Activated T-helper 1 cell treated with anti-CD3 and anti-CD28 coated beads, Interleukin-12 subunit alpha, Interleukin-12 subunit beta, Interleukin-2, Interleukin-4 antibody, amounts not matched to agents 30 ng/mL and 10 ng/mL and 1 ng/mL, durations not matched to agents 14 hours and 24 hours and 36 hours (primary cell): ENCODE measurements at regions of chr12 and their contacts with region 1.

Region 1: GRCh38 chr12:94305130-94305957 is 154.3 kb downstream of the CEP83 start:
- DNase-seq: peak; percentile 75
- H3K4me3 Mint-ChIP-seq: peak overlapping the region; percentile 58
- H3K27ac Mint-ChIP-seq: peak overlapping the region; percentile 80
- H3K4me1 Mint-ChIP-seq: peaks cover 76% of the 10 kb centered on the region
- H3K27me3 Mint-ChIP-seq: no peaks in the 10 kb centered on the region

Region 2: GRCh38 chr12:94244165-94245133 is 60.9 kb before region 1 on chr12:
- intact Hi-C with region 1: loop called (anchors 1 kb)
- DNase-seq: peak; percentile 25
- H3K4me3 Mint-ChIP-seq: peak overlapping the region; percentile 25
- H3K27ac Mint-ChIP-seq: peak overlapping the region; percentile 50
- H3K4me1 Mint-ChIP-seq: peaks cover 41% of the 10 kb centered on the region
- H3K27me3 Mint-ChIP-seq: no peaks in the 10 kb centered on the region

Region 3: DNA sequence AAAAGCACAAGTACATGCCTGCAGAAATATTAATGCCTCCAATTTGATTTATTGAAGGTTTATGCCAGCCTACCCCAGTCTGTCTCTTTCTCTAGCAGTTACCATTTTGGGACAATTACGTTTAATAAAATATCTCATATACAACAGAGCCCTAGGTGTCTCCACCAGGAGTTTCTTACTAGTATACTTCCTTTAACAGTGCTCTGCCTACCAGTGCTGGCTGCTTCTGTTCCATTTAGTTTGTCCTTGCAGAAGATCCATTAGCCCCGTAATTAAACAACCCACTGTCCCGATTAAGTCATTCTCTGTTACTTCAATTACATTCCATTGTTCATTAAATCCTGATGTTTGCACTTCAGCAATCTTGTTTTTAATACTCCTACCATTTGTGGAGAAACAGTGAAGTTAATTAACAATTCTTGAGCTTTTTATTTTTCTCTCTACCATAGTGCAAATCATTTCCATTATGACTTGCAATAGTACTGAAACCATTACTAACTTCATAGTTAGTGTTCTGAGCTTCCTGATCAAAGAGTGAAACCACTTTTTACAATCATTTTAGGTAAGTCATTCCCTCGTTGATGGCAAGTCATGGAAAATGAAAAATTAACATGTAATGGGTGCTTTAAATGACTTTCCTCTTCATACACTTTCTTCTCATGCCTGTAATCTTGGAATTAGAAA is 35.9 kb before region 1 on chr12:
- intact Hi-C with region 1: loop called (anchors 1 kb)
- DNase-seq: no peak
- H3K4me3 Mint-ChIP-seq: peak overlapping the region; percentile 43
- H3K27ac Mint-ChIP-seq: peak overlapping the region; percentile 72
- H3K4me1 Mint-ChIP-seq: peaks cover 72% of the 10 kb centered on the region
- H3K27me3 Mint-ChIP-seq: no peaks in the 10 kb centered on the region

Region 4: DNA sequence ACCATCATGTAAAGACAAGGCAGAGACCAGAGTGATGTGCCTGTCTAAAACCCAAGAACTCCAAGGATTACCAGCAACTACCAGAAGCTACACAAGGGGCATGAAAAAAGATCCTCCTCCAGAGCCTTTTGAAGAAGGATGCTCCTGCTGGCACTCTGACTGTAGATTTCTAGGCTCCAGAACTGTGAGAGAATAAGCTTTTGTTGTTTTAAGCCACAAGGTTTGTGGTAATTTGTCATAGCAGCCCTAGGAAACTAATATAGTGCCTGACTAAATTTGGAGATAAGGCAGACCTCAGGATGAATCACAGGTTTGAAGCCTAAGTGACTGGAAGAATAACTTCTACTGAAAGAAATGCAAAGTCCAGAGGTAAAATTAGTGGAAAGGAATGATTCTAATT is 21.4 kb after region 1 on chr12:
- intact Hi-C with region 1: loop called (anchors 1 kb)
- DNase-seq: no peak
- H3K4me3 Mint-ChIP-seq: no peak overlapping the region
- H3K27ac Mint-ChIP-seq: peak overlapping the region; percentile 51
- H3K4me1 Mint-ChIP-seq: peaks cover 29% of the 10 kb centered on the region
- H3K27me3 Mint-ChIP-seq: no peaks in the 10 kb centered on the region

Region 5: GRCh38 chr12:94379479-94380113 is 74.3 kb after region 1 on chr12:
- intact Hi-C with region 1: loop called (anchors 2 kb)
- DNase-seq: peak; percentile 2
- H3K4me3 Mint-ChIP-seq: peak overlapping the region; percentile 3
- H3K27ac Mint-ChIP-seq: peak overlapping the region; percentile 79
- H3K4me1 Mint-ChIP-seq: peaks cover 58% of the 10 kb centered on the region
- H3K27me3 Mint-ChIP-seq: no peaks in the 10 kb centered on the region

Region 6: DNA sequence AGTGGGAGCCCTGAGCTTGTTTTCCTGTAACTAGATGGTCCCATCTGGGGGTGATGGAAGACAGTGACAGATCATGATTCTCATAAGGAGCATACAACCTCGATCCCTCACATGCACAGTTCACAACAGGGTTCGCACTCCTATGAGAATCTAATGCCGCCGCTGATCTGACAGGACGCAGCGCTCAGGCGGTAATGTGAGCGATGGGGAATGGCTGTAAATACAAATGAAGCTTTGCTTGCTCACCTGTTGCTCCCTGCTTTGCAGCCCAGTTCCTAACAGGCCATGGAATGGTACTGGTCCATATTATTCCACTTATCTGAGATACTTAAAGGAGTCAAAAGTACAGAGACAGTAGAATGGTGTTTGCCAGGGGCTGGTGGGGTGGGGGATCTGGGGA is 164.2 kb after region 1 on chr12:
- intact Hi-C with region 1: no loop called
- DNase-seq: no peak
- H3K4me3 Mint-ChIP-seq: no peak overlapping the region
- H3K27ac Mint-ChIP-seq: no peak overlapping the region
- H3K4me1 Mint-ChIP-seq: no peaks in the 10 kb centered on the region
- H3K27me3 Mint-ChIP-seq: peaks cover 1% of the 10 kb centered on the region

Region 7: GRCh38 chr12:94532490-94533422 is 227.4 kb after region 1 on chr12:
- intact Hi-C with region 1: loop called (anchors 10 kb)
- DNase-seq: peak; percentile 59
- H3K4me3 Mint-ChIP-seq: no peak overlapping the region
- H3K27ac Mint-ChIP-seq: no peak overlapping the region
- H3K4me1 Mint-ChIP-seq: peaks cover 17% of the 10 kb centered on the region
- H3K27me3 Mint-ChIP-seq: peaks cover 10% of the 10 kb centered on the region

Region 8: DNA sequence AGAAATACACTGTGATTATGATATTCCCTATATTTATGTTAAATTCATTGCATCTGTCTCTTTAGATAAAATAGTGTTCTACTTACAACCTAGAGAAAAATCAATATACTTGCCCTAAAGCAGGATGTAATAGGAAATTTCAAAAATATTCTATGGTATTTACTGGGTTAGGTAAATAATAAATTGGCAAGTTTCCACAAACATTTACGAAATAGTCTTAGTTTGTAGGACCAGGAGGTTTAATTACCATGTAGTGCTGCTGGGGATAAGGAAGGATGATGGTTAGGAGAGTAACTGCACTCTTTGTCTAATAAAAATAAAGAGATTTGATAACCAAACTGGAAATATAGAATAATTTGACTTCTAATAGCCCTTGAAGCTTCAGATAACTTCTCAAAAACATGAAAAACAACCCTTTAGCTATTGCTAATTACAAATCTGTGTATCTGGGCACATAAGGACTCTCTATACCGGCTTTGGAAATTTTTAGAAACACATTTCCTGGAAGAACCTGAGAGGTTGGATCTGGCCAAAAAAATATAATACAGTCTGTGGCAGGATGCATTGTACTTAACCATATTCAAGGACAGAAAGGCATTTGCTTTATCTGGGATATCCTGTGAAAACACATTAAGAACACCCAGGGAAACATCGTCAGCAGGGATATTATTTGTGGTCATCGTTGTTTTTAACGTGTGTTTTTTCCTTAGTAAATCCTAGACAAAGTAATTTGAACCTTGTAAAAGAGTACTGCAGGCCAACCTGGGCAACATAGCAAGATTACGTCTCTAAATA is 381.7 kb after region 1 on chr12:
- intact Hi-C with region 1: no loop called
- DNase-seq: no peak
- H3K4me3 Mint-ChIP-seq: no peak overlapping the region
- H3K27ac Mint-ChIP-seq: no peak overlapping the region
- H3K4me1 Mint-ChIP-seq: no peaks in the 10 kb centered on the region
- H3K27me3 Mint-ChIP-seq: peaks cover 2% of the 10 kb centered on the region

Region 9: GRCh38 chr12:95802482-95803264 is 1497.3 kb after region 1 on chr12:
- intact Hi-C with region 1: no loop called
- DNase-seq: no peak
- H3K4me3 Mint-ChIP-seq: no peak overlapping the region
- H3K27ac Mint-ChIP-seq: no peak overlapping the region
- H3K4me1 Mint-ChIP-seq: no peaks in the 10 kb centered on the region
- H3K27me3 Mint-ChIP-seq: peaks cover 19% of the 10 kb centered on the region